HEK293T (cell line): ENCODE measurements at regions of chr2 and their contacts with region 1.

Region 1: DNA sequence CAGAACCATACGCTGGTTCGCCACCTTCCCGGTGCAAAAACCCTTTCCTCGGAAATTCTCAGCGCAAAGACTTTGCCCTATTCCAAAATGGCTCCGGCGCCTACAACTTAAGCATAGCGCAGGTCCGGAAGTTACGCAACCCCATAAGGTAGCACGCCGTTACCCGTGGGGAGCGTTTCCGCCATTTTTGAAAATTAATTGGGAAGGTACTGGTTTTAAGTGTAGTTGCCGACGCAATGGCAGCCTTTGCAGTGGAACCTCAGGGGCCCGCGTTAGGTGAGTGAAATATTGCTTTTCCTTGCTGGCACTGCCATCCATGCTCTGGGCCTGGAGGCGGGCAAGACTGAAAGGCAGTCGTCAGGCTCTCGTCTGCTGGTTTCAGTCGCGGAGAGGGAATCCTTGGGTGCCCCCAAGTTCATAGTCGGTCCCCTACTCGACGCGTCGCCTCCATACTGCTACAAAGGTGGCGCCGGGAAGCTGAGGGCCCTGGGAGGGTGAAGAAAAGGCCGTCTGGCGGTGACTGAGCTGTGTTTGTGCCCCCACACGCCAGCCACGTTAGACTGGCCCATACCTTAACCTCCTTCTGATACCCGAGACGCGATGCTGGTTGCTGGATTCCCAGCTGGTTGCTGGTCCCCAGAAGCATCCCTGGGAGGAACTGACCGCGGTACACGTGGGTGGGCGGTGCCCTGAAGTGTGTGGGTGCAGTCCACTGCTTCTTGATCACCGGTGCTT is at the start of gene NUP35:
- DNase-seq: peak; percentile 77

Region 2: DNA sequence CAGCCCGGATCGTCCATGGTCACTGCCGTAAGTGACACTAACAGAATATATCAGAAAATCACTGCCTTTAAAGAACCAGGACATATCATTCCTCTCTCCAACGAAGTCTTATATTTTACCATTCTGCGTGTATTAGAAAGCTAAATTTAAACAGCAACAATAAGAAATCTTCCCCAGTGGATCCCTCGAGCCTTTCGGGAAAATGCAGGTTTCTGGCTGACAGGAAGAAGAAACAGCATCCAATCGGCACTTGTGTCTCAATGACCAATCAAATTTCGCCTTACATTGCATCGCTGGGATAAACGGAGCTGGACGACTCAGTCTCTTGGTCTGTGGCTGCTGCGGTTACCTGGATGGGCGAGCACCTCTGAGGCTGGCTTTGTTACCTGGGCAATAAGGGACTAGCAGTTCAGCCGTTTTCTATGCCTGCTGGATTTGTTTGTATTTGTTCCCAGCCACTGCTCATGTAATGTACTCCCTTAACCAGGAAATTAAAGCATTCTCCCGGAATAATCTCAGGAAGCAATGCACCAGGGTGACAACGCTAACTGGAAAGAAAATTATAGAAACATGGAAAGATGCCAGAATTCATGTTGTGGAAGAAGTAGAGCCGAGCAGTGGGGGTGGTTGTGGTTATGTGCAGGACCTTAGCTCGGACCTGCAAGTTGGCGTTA is 45.8 kb before region 1 on chr2 and contains the start of gene DUSP19:
- CTCF ChIA-PET with region 1: no interaction called
- POLR2A ChIA-PET with region 1: interaction called, 29 read pairs
- DNase-seq: peak; percentile 92